Naive thymus-derived CD4-positive, alpha-beta T cell (primary cell): ENCODE measurements at regions of chr1 and their contacts with region 1.

Region 1: GRCh38 chr1:161305867-161306519 is 3.8 kb downstream of the MPZ start:
- DNase-seq: peak; percentile 67 to 94 (median 92)
- ATAC-seq: peak; percentile 99
- H3K4me3 ChIP-seq: peak overlapping the region; percentile 86
- H3K4me3 Mint-ChIP-seq: peak overlapping the region; percentile 93 to 100 (median 98)
- H3K27ac ChIP-seq: peak overlapping the region; percentile 78
- H3K27ac Mint-ChIP-seq: peak overlapping the region; percentile 91 to 98 (median 95)
- H3K4me1 ChIP-seq: peaks cover 16 to 19% of the 10 kb centered on the region in 2 donors
- H3K4me1 Mint-ChIP-seq: peaks cover 27 to 47% (median 41%) of the 10 kb centered on the region in 7 donors
- H3K27me3 ChIP-seq: no peaks in the 10 kb centered on the region
- H3K27me3 Mint-ChIP-seq: peaks cover 0 to 5% (median 0%) of the 10 kb centered on the region in 5 donors

Region 2: GRCh38 chr1:160489513-160490261 is 816.3 kb before region 1 on chr1:
- CTCF ChIA-PET with region 1: no interaction called
- POLR2A ChIA-PET with region 1: no interaction called
- intact Hi-C with region 1: no loop called
- DNase-seq: no peak
- ATAC-seq: no peak
- H3K4me3 ChIP-seq: no peak overlapping the region
- H3K4me3 Mint-ChIP-seq: no peak overlapping the region
- H3K27ac ChIP-seq: no peak overlapping the region
- H3K27ac Mint-ChIP-seq: peak overlapping the region in 7 of 9 donors; percentile 15 to 81 (median 55)
- H3K4me1 ChIP-seq: no peaks in the 10 kb centered on the region
- H3K4me1 Mint-ChIP-seq: peaks cover 2 to 31% (median 15%) of the 10 kb centered on the region in 7 donors
- H3K27me3 ChIP-seq: no peaks in the 10 kb centered on the region
- H3K27me3 Mint-ChIP-seq: no peaks in the 10 kb centered on the region

Region 3: GRCh38 chr1:161209790-161210409 is 96.1 kb before region 1 on chr1:
- CTCF ChIA-PET with region 1: interaction called, 9 read pairs
- POLR2A ChIA-PET with region 1: interaction called, 5 read pairs
- intact Hi-C with region 1: loop called in 1 of 2 experiments (anchors 1 kb)
- DNase-seq: peak; percentile 53 to 79 (median 73)
- ATAC-seq: peak; percentile 98
- H3K4me3 ChIP-seq: no peak overlapping the region
- H3K4me3 Mint-ChIP-seq: no peak overlapping the region
- H3K27ac ChIP-seq: peak overlapping the region; percentile 27
- H3K27ac Mint-ChIP-seq: peak overlapping the region in 8 of 9 donors; percentile 60 to 89 (median 66)
- H3K4me1 ChIP-seq: peaks cover 0 to 31% of the 10 kb centered on the region in 2 donors
- H3K4me1 Mint-ChIP-seq: peaks cover 12 to 49% (median 41%) of the 10 kb centered on the region in 7 donors
- H3K27me3 ChIP-seq: no peaks in the 10 kb centered on the region
- H3K27me3 Mint-ChIP-seq: no peaks in the 10 kb centered on the region

Region 4: DNA sequence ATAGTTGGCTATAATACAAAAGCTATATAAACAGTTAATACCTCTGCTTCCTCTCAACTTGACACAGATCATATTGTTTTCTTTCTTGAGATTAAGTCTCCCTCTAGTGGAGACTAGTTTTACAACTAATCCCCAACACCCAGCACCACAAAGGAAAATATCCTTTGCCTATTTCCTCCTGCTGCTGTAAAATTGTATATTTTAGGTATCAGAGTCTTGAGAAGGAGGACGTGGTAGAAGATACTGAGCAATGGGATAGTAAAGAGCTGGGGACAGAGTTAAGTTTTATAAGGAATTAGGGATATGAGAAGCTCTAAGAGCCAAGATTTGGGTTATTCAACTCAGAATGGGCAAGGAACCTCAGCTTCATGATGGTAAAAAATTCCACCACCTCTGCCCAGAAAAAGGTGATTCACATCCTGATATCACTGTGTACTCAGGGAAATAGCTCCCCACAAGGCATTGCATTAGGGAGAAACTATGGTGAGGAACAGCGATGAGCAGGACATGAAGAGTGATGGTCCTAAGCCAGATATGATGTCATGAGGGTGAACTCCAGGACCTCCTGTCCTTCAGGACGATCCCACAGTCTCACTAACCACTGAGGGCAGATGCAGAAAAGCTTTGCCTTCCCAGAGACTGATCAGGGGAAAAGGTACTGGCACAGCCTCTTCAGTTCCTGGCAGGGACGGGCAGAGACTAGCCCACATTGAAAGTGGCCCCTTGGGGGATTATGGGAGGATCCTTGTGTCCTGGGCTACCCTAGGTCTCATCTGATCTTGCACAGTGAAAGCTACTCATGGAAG is 76.4 kb after region 1 on chr1:
- CTCF ChIA-PET with region 1: interaction called, 7 read pairs
- POLR2A ChIA-PET with region 1: interaction called, 3 read pairs
- intact Hi-C with region 1: loop called (anchors 1 to 5 kb)
- DNase-seq: peak in 6 of 9 donors; percentile 40 to 68 (median 59)
- ATAC-seq: peak; percentile 91
- H3K4me3 ChIP-seq: no peak overlapping the region
- H3K4me3 Mint-ChIP-seq: no peak overlapping the region
- H3K27ac ChIP-seq: no peak overlapping the region
- H3K27ac Mint-ChIP-seq: peak overlapping the region in 3 of 9 donors; percentile 53 to 76 (median 73)
- H3K4me1 ChIP-seq: peaks cover 0 to 3% of the 10 kb centered on the region in 2 donors
- H3K4me1 Mint-ChIP-seq: peaks cover 0 to 19% (median 13%) of the 10 kb centered on the region in 7 donors
- H3K27me3 ChIP-seq: no peaks in the 10 kb centered on the region
- H3K27me3 Mint-ChIP-seq: no peaks in the 10 kb centered on the region

Region 5: DNA sequence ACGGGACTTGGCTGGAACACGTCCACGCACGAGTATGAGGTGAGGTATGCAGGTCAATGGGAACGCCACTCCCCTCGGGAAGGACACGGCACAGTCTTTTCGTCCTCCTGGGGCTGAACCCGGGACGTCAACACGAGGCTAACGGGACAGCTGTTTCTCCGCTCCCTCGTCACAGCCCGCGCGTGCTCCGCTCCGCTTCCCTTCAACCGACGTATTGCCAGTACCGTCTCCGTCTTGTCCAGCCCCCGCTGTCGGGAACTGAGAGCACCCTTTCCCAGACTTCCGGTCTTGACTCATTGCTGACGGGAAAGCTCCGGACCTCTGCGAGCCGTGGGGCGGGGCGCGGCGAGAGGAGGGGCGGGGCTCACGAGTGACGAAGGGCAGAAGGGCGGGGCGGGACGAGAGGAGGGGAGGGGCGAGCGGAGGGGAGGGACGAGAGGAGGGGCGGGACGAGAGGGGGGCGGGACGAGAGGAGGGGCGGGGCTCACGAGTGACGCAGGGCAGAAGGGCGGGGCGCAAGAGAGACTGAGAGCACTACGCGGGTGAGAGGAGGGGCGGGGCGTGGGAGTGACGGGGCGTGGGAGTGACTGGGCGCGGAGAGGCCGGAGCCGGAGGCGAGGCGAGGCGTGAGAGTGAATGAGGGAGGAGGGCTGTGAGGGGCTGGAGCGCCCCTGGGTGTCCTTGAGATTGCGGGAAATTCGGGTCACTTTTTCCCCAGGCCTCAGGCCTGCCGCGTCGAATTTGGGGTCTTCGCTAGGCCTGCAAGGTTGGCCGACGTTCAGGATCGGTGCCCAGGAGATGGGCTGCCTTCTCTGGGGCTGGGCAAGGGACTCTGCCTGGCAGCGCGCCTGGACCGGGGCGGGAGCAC is 83.9 kb after region 1 on chr1:
- CTCF ChIA-PET with region 1: interaction called, 3 read pairs
- POLR2A ChIA-PET with region 1: interaction called, 24 read pairs
- intact Hi-C with region 1: loop called in 1 of 2 experiments (anchors 1 kb)
- DNase-seq: peak; percentile 85 to 96 (median 92)
- ATAC-seq: peak; percentile 97
- H3K4me3 ChIP-seq: peak overlapping the region; percentile 86
- H3K4me3 Mint-ChIP-seq: peak overlapping the region; percentile 88 to 95 (median 92)
- H3K27ac ChIP-seq: peak overlapping the region; percentile 93
- H3K27ac Mint-ChIP-seq: peak overlapping the region; percentile 93 to 99 (median 98)
- H3K4me1 ChIP-seq: peaks cover 3 to 4% of the 10 kb centered on the region in 2 donors
- H3K4me1 Mint-ChIP-seq: peaks cover 0 to 50% (median 28%) of the 10 kb centered on the region in 7 donors
- H3K27me3 ChIP-seq: no peaks in the 10 kb centered on the region
- H3K27me3 Mint-ChIP-seq: no peaks in the 10 kb centered on the region